GM13976 (cell line): ENCODE measurements at regions of chr12 and their contacts with region 1.

Region 1: DNA sequence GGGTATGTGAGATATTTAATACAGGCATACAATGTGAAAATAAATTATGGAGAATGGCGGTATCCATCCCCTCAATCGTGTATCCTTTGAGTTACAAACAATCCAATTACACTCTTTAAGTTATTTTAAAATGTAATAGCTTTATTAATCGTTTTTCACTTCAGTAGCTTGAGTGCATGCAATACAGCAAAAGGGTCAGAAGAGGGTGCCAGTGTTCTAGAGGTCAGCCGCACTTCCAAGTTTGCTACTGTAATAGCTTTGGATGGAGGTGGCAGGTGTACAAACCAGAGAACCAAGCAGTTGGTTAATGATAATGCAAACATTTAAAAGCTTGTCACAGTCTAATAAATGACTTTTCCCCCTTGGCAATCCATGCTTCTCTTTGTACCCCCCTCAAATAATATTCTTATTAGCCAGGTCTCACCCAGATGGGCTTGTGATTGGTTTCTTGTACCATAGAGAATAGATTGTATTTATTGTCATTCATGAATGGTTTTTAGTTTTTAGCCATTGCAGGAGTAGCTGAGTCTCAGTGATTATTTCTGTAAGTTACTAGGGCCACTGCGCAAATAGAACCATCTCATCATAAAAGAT is 127.0 kb downstream of the ERC1 start:
- DNase-seq: peak; percentile 38
- CTCF ChIP-seq: peak; percentile 77

Region 2: DNA sequence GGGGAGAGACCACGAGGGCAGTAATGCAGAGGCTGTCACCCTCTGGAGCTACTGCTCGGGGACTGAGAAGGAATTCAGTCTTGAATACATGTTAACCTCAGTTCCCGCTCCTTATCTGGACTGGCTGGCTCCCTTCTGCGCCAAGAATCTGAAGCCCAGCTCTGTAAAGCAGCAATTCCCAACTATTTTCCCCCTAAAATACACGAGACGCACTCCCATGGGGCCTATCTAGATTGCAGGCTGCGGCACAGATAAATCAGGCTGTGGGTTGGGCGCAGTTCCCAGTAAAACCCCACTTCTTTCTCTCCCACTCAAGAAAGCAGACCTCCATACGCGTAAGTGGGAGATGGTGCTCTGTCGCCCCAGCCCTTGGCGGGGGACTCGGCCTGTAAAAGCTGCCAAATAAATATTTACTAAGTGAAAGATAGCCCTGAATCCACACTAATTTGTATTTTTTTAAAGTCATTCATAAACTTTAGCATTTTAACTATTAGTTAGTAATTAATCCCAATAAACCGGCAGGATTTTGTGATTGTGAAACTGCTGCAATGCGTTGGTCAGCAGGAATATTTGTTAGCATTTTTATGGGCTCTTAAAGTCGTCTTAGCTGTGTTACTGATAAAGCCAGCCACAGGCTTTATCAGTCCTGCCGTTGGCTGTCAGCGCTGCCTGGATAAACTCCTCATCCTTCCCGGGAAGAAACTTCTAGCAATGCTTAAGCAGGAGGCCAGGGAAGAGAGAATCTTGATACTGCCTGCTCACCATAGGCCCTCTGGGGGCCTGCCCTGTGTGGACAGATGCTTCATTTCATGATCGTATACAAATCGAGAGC is 458.6 kb after region 1 on chr12:
- in situ Hi-C with region 1: loop called (anchors 5 kb)
- DNase-seq: no peak
- CTCF ChIP-seq: no peak

Region 3: DNA sequence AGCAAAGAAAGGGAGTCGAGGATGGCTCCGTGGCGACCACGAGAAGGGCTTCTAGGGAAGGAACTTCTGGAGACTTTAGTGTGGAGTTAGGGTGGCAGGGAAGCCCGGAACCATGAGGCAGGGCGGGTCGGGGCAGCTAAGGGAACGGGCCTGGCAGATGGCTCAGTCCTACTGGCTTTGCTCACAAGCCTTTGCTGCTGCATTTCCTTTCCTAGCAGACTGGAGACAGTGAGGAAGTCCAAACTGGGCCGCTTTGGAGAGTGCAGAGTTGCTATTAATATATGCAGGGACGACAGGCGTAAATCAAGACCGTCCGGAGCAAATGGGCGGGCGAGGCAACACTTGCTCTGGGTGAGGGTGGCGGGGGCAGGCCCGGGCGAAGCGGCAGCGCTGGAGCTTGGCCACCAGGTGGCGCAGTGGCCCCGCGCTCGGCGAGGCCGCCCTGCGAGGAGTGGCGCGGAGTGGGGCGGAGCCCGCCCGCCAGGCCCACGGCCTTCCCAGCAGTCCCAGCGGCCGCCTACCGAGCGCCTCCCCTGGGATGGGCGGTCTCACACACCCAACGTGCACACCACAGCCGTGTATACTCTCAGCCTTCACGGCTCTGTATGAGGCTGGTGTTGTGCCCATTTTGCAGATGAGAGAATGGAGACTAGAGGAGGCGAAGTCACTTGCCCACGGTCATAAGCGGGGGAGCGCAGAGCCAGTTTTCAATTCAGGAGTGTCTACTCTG is 677.9 kb after region 1 on chr12:
- in situ Hi-C with region 1: loop called (anchors 25 kb)
- DNase-seq: peak; percentile 97
- CTCF ChIP-seq: peak; percentile 98